Endothelial cell of umbilical vein (primary cell): ENCODE measurements at regions of chr7 and their contacts with region 1.

Region 1: GRCh38 chr7:143391462-143392404 is 10.6 kb downstream of the ZYX start:
- DNase-seq: peak; percentile 84
- H3K4me3 ChIP-seq: no peak overlapping the region
- H3K27ac ChIP-seq: peak overlapping the region; percentile 88
- H3K4me1 ChIP-seq: peaks cover 79% of the 10 kb centered on the region
- H3K27me3 ChIP-seq: no peaks in the 10 kb centered on the region
- CTCF ChIP-seq: no peak
- POLR2A ChIP-seq: peak; percentile 58

Region 2: GRCh38 chr7:143287935-143288826 is 103.6 kb before region 1 on chr7 and contains the start of gene CASP2:
- CTCF ChIA-PET with region 1: no interaction called
- POLR2A ChIA-PET with region 1: interaction called, 7 read pairs
- dilution Hi-C with region 1: no loop called
- intact Hi-C with region 1: loop called (anchors 1 kb)
- DNase-seq: peak; percentile 99
- H3K4me3 ChIP-seq: peak within 1 kb of the TSS; percentile 81 to 97 (median 91)
- H3K27ac ChIP-seq: peak within 1 kb of the TSS; percentile 91
- H3K4me1 ChIP-seq: peaks cover 24% of the 10 kb centered on the region
- H3K27me3 ChIP-seq: no peaks in the 10 kb centered on the region
- CTCF ChIP-seq: peak in 1 of 2 donors; percentile 40
- POLR2A ChIP-seq: peak; percentile 67
- total RNA-seq, gene CASP2: 57.9 and 61.7 TPM in 2 replicates

Region 3: GRCh38 chr7:143372070-143372469 is 19.7 kb before region 1 on chr7:
- CTCF ChIA-PET with region 1: interaction called, 4 read pairs
- POLR2A ChIA-PET with region 1: no interaction called
- dilution Hi-C with region 1: no loop called
- intact Hi-C with region 1: loop called (anchors 2 kb)
- DNase-seq: peak; percentile 87
- H3K4me3 ChIP-seq: no peak overlapping the region
- H3K27ac ChIP-seq: no peak overlapping the region
- H3K4me1 ChIP-seq: peaks cover 28% of the 10 kb centered on the region
- H3K27me3 ChIP-seq: no peaks in the 10 kb centered on the region
- CTCF ChIP-seq: peak in 1 of 2 donors; percentile 16
- POLR2A ChIP-seq: no peak

Region 4: GRCh38 chr7:143416565-143417149 is 24.9 kb after region 1 on chr7:
- CTCF ChIA-PET with region 1: interaction called, 18 read pairs
- POLR2A ChIA-PET with region 1: no interaction called
- dilution Hi-C with region 1: no loop called
- intact Hi-C with region 1: loop called (anchors 1 kb)
- DNase-seq: peak; percentile 56
- H3K4me3 ChIP-seq: no peak overlapping the region
- H3K27ac ChIP-seq: no peak overlapping the region
- H3K4me1 ChIP-seq: peaks cover 9% of the 10 kb centered on the region
- H3K27me3 ChIP-seq: no peaks in the 10 kb centered on the region
- CTCF ChIP-seq: peak; percentile 41 to 59
- POLR2A ChIP-seq: no peak

Region 5: GRCh38 chr7:143499246-143499645 is 107.5 kb after region 1 on chr7:
- CTCF ChIA-PET with region 1: interaction called, 24 read pairs
- POLR2A ChIA-PET with region 1: interaction called, 17 read pairs
- dilution Hi-C with region 1: loop called (anchors 25 kb)
- intact Hi-C with region 1: loop called (anchors 1 kb)
- DNase-seq: peak; percentile 97
- H3K4me3 ChIP-seq: peak overlapping the region in 1 of 3 experiments; percentile 31
- H3K27ac ChIP-seq: peak overlapping the region; percentile 99
- H3K4me1 ChIP-seq: peaks cover 51% of the 10 kb centered on the region
- H3K27me3 ChIP-seq: no peaks in the 10 kb centered on the region
- CTCF ChIP-seq: no peak
- POLR2A ChIP-seq: peak; percentile 61

Region 6: DNA sequence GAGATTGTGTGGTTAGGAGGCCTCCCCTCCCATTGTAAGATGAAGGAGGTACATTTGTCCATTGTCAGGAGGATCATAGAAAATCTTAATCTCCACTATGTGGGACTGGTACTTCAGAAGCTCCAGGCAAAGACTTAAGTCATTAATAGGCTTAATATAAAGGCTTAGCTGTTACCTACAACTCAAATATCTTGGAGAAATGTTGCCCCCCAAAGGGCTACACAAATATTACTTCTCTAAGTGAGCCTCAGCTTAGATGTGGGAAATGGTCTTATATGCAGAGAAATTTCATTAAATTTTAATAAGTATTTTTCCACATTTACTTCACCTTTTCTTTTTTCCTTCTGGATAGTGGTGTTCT is 113.2 kb after region 1 on chr7:
- CTCF ChIA-PET with region 1: interaction called, 24 read pairs
- POLR2A ChIA-PET with region 1: interaction called, 17 read pairs
- dilution Hi-C with region 1: loop called (anchors 25 kb)
- intact Hi-C with region 1: loop called (anchors 1 kb)
- DNase-seq: peak; percentile 78
- H3K4me3 ChIP-seq: no peak overlapping the region
- H3K27ac ChIP-seq: no peak overlapping the region
- H3K4me1 ChIP-seq: peaks cover 19% of the 10 kb centered on the region
- H3K27me3 ChIP-seq: no peaks in the 10 kb centered on the region
- CTCF ChIP-seq: peak in 1 of 2 donors; percentile 15
- POLR2A ChIP-seq: no peak